PC-3 (cell line): ENCODE measurements at regions of chr11 and their contacts with region 1.

Region 1: DNA sequence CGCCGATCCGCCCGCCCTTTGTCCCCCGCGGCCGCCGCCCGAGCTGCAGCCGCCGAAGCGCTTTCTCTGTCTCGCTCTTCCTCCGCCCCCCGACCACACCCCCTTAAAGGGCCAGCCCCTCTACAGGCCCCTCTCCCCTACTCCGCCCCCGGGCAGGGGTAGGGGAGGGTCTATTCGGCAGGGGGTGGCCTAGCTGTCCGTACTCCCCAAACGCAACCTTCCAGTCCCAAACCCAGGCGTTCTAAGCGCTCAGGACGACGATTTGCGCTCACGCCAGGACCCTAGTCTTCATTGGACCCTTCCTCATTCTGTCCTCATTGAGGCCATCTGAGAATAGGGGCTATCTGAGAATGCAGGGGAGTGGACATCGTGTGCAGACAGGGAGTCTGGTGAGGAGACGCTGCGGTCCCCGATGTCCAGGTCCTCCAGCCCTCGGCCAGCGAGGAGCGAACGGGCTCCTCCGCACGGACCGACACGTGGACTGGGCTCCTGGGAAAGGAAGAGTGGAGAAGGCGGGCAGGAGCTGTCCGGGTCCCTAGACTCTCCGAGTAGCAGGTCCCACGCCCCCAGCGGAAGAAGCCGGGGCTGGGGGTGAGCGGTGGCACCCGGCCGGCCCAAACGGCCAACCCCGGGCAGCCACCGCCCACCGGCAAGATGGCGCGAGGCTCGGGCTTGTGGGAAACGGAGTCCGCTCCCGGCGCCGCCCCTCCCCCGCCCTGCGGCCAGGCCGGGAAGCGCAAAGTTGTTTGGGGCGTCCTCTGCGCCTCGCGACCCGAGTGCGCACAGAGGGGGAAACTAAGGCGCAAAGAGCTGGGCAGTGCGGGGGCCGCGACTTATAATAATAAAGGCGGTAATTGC is at the start of gene PPP1R14B:
- DNase-seq: peak; percentile 91
- ATAC-seq: peak; percentile 41
- H3K4me3 ChIP-seq: peak within 1 kb of the TSS; percentile 80
- H3K27ac ChIP-seq: peak within 1 kb of the TSS; percentile 94
- H3K4me1 ChIP-seq: peaks cover 49% of the 10 kb centered on the region
- H3K27me3 ChIP-seq: no peaks in the 10 kb centered on the region
- CTCF ChIP-seq: no peak
- total RNA-seq, gene PPP1R14B: 1,496 and 2,060 TPM in 2 replicates

Region 2: DNA sequence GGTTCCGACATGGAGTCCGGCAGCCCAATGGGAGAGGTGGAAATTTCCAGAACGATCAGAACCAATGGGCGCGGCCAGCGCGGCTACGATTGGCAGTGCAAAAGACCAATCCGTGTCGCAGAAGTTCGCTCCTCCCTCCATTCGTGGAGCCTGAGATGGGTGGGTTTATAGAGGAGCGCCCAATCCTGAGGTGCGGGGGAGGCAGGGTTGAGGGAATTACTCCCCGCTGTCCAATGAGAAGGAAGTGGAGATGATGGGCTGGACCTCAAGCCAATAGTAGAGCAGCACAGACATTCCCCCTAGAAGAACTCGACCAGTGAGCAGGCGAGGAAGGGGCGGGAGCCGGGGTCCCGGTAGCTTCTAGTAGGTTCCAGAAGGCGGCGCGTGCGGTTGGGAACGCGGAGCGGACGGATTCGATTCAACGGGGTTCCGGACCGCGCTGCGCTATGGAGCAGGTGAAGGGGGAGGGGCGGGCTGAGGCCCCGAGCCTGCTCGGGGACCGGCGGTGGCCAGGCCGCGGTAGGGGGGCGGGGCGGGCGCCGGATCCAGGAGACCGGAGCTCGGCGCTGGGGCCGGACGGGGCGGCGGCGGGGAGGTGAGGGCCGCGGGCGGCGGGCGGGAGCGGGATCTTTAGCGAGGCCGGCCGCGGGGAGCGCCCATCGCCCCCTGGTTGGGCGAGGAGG is 61.1 kb before region 1 on chr11 and contains the start of gene STIP1:
- CTCF ChIA-PET with region 1: no interaction called
- POLR2A ChIA-PET with region 1: interaction called, 17 read pairs
- intact Hi-C with region 1: no loop called
- DNase-seq: peak; percentile 100
- ATAC-seq: peak; percentile 86
- H3K4me3 ChIP-seq: peak within 1 kb of the TSS; percentile 81
- H3K27ac ChIP-seq: peak within 1 kb of the TSS; percentile 59
- H3K4me1 ChIP-seq: peaks cover 27% of the 10 kb centered on the region
- H3K27me3 ChIP-seq: no peaks in the 10 kb centered on the region
- CTCF ChIP-seq: peak; percentile 39; the same call in 1 of the 2 replicates
- total RNA-seq, gene STIP1: 543 and 557 TPM in 2 replicates

Region 3: DNA sequence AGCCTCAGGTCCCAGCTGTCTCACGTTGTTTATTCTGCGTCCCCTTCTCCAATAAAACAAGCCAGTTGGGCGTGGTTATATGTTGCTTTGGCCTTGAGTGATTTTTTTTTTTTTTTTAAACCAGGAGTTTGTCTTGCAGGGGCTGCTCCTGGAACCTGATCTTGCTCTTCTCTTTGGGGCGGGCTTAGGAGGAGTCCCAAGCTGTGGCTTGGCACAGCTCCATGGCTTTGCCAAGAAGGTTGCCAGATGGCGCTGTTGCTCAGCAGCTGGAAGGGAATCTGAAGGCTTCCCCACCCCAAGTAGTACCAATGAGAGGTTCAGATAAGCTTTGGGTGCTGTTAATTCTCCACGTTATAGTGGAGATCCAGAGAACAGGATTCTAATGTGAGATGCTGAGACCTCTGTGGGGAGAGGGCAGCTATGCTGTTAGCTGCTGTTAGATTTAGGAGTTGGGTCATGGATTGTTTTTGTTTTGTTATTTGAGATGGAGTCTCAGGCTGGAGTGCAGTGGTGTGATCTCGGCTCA is 42.6 kb before region 1 on chr11:
- CTCF ChIA-PET with region 1: interaction called, 11 read pairs
- POLR2A ChIA-PET with region 1: no interaction called
- intact Hi-C with region 1: loop called (anchors 1 kb)
- DNase-seq: peak; percentile 98
- ATAC-seq: peak; percentile 73
- H3K4me3 ChIP-seq: no peak overlapping the region
- H3K27ac ChIP-seq: no peak overlapping the region
- H3K4me1 ChIP-seq: 0 out of 2 replicates have a peak, but pooled peaks cover 3% of the 10 kb centered on the region
- H3K27me3 ChIP-seq: no peaks in the 10 kb centered on the region
- CTCF ChIP-seq: peak; percentile 96

Region 4: GRCh38 chr11:64269380-64270234 is 22.5 kb after region 1 on chr11:
- CTCF ChIA-PET with region 1: no interaction called
- POLR2A ChIA-PET with region 1: interaction called, 3 read pairs
- intact Hi-C with region 1: loop called (anchors 2 kb)
- DNase-seq: peak; percentile 100
- ATAC-seq: peak; percentile 80
- H3K4me3 ChIP-seq: peak overlapping the region; percentile 69
- H3K27ac ChIP-seq: peak overlapping the region; percentile 83
- H3K4me1 ChIP-seq: peaks cover 35% of the 10 kb centered on the region
- H3K27me3 ChIP-seq: no peaks in the 10 kb centered on the region
- CTCF ChIP-seq: no peak

Region 5: DNA sequence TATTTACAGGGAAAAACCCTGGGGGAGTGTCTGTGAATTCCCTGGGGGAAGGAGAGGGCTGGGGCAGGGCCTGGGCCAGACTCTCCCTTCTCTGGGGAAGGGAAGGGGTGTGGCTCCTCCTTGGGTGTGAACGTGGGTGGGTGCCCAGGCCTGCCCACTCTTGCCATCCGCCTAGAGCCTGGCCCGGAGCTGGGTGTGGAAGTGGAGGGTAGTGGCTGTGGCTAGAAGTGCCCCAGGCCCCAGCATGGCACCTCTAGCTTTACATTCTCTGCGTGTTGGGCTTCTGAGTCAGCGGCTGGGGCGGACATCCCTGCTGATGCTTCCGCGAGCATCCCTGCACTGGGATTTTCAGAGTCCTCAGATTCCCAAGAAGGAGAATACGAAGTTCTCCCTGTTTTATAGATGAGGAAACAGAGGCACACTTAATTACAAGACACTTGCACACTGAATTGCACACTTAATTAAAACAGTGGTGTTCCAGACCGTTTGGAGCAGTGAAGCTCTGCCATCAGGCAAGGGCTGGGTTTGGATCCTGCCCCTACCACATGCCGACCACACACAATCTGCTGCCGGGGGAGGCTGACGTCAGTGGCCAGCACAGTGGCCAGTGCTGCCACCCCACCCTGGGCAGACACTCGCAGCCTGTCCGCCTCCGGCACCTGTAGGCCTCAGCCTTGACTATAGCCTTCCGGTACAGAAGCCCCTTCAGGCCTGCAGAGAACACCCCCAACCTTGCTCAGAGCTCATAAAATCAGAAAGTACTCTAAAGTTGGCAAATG is 29.7 kb after region 1 on chr11:
- CTCF ChIA-PET with region 1: interaction called, 4 read pairs
- POLR2A ChIA-PET with region 1: interaction called, 18 read pairs
- intact Hi-C with region 1: no loop called
- DNase-seq: peak; percentile 91
- ATAC-seq: peak; percentile 97
- H3K4me3 ChIP-seq: no peak overlapping the region
- H3K27ac ChIP-seq: peak overlapping the region; percentile 32
- H3K4me1 ChIP-seq: peaks cover 21% of the 10 kb centered on the region
- H3K27me3 ChIP-seq: no peaks in the 10 kb centered on the region
- CTCF ChIP-seq: no peak

Region 6: DNA sequence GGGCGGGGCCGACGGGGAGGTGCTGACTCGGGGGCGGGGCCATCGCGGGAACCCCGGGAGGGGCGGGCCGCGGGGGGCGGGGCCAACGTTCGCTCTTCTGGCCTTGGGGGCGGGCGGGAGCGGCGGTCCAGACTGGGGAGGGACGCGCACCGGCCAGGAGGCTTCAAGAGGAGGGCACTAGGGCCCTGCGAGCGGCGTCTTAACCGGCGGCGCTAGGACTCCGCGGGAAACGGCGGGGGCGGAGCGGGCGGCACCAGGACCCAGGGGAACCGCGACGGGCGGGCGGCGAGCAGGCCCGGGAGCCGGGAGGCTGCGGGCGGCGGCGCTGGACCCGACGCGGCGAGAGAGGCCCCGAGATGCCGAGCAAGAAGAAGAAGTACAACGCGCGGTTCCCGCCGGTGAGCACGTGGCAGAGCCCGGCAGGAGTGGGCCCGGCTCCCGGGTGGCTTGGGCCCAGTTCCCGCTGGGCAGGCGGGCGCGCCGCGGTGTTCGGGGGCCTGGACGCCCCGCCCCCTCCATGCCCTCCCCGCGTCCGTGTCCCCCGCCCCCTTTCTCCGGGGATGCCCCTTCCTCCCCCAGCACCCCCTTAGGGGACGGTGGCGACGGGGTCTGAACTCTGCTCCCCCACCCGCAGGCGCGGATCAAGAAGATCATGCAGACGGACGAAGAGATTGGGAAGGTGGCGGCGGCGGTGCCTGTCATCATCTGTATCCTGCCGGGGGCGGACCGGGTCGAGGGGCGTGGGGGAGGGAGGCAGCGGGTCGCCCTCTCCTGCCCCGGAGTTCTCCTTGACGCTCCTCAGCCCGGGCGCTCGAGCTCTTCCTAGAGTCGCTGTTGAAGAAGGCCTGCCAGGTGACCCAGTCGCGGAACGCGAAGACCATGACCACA is 1672.3 kb after region 1 on chr11 and contains the start of gene DRAP1:
- CTCF ChIA-PET with region 1: no interaction called
- POLR2A ChIA-PET with region 1: interaction called, 10 read pairs
- intact Hi-C with region 1: no loop called
- DNase-seq: peak; percentile 98
- ATAC-seq: peak; percentile 53
- H3K4me3 ChIP-seq: peak within 1 kb of the TSS; percentile 82
- H3K27ac ChIP-seq: peak within 1 kb of the TSS; percentile 93
- H3K4me1 ChIP-seq: peaks cover 46% of the 10 kb centered on the region
- H3K27me3 ChIP-seq: no peaks in the 10 kb centered on the region
- CTCF ChIP-seq: no peak
- total RNA-seq, gene DRAP1: 944 and 1,531 TPM in 2 replicates